Left cardiac atrium (tissue), 4 donors: ENCODE measurements at regions of chr19 and their contacts with region 1.

Region 1: DNA sequence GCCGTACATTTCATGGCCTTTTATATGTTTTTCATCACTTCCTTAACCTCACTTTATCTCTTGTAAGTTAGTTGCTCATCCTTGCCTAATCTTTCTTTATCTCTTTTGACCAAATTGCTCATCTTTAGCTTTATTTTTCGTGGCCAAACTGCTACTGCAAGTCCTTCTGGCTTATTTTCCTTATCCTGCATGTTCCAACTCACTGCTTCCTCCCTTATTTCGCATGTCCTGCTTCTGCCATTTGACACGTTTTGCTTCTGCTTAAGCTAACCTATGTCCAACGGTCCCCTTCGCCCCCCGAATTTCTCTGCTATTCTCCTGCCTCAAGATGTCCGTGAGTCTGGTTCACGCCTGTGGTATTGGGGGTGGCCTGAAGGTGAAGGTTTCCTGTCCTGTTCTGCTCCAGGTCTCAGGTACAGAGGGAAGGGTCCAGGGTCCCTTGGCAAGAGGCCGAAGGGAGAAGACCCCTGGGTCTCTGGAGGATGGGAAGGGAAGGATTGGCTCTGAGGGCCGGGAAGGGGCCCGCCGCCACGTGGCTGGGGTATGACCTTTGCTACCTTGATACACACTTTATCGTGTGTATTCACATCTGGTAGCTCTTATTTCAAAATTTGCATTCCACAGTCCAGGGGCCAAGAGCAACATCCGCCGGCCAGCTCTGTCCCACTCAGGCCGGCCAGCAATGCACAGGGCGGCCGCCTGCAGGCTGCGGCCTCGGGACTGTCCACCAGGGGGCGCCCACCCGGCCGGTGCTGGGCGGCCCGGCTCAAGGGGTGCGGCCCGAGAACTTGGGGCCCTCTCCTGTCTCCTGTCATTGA is 2.9 kb upstream of the C19orf85 start:
- DNase-seq: peak; percentile 79
- ATAC-seq: peak; percentile 90 to 94

Region 2: GRCh38 chr19:54916822-54917221 is 550.6 kb before region 1 on chr19:
- intact Hi-C with region 1: no loop called
- DNase-seq: no peak
- ATAC-seq: no peak

Region 3: DNA sequence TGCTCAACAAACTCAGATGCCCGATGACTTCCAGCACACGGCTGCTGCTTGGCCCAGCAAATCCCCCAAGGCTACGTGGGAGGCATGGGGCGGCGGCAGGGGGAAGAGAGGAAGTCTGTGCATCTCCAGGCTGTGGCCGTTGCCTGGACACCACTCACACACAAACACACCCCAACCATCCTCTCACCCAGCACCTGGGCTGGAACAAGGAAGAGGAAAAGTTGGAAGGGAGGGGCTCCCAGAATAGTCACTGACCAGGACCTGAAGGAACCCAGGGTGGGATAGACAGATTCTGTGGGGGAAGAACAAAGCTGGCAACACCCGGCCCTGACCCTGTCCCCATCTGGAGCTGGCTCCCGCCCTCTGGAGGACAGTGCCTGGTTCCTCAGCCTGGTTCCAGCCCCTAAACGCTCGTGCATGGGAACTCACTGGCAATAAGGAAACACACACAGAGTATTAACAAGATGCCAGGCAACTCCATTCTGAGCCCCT is 219.8 kb before region 1 on chr19:
- intact Hi-C with region 1: no loop called
- DNase-seq: peak; percentile 60
- ATAC-seq: peak in 1 of 2 donors; percentile 80

Region 4: GRCh38 chr19:55418185-55418584 is 49.3 kb before region 1 on chr19:
- intact Hi-C with region 1: no loop called
- DNase-seq: peak; percentile 37
- ATAC-seq: peak; percentile 87 to 94

Region 5: GRCh38 chr19:55503502-55504251 is 36.2 kb after region 1 on chr19:
- intact Hi-C with region 1: loop called (anchors 2 to 5 kb)
- DNase-seq: peak; percentile 96
- ATAC-seq: peak; percentile 97 to 99

Region 6: DNA sequence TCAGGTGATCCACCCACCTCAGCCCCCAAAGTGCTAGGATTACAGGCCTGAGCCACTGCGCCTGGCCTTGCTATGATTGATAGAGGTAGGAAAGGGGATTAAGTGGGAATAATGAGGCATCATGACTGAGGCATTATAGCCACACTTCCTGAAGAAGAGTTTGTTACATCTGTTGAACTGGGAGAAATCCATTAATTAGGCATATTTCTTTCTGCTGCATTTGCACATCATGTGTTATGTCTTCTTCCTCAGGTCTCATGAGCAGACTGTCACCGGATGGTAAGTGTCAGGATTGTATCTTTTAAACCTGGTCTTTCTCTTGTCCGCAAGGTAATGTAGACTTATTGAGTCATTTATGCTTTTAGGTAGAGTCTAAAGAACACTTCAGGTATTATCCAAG is 817.3 kb after region 1 on chr19:
- intact Hi-C with region 1: no loop called
- DNase-seq: no peak
- ATAC-seq: no peak